ENCODE measurements at regions of chr1 and their contacts with region 1.

Region 1: DNA sequence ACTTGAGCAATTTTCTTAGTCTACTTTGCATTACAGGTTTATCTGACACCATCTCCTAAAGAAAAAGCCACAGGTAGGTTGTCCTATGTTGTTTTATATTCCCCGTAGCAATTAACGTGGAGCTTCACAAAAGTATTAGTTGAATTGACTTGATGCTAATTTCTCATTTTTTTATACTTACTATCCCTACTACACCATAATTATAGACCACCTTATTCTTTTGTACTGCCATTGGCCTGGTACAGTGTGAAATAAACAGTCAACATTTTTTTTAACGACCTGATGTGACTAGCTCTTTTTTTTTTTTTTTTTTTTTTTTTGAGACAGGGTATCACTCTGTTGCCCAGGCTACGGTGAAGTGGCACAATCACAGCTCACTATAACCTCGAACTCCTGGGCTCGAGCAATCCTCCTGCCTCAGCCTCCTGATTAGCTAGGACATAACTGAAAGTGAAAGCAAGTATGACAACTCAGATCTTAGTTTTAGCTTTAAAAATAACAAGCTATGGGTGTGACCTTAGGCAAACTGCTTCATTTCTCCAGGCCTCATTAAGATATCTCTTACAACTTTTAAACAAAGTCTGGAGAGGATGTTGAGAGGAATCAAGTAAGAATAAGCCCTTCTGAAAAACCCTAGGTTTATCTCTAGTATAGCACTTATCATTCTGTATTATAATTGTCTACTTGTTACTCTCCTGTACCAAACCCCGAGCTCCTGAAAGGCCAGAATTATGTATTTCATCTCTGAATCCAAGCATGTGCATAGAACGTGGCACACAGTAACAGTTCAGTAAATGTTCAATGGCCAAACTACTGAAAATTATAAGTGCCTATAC is 49.5 kb downstream of the LUZP1 start:
- DNase-seq: no peak
- H3K4me3 ChIP-seq: no peak overlapping the region
- H3K27ac ChIP-seq: no peak overlapping the region
- H3K4me1 ChIP-seq: peaks cover 16% of the 10 kb centered on the region
- H3K27me3 ChIP-seq: no peaks in the 10 kb centered on the region
- CTCF ChIP-seq: no peak

Region 2: GRCh38 chr1:23004112-23004511 is 115.1 kb before region 1 on chr1:
- CTCF ChIA-PET with region 1: no interaction called
- POLR2A ChIA-PET with region 1: no interaction called
- intact Hi-C with region 1: no loop called
- DNase-seq: peak; percentile 50 to 83
- H3K4me3 ChIP-seq: peak overlapping the region; percentile 58
- H3K27ac ChIP-seq: peak overlapping the region; percentile 92
- H3K4me1 ChIP-seq: peaks cover 66% of the 10 kb centered on the region
- H3K27me3 ChIP-seq: no peaks in the 10 kb centered on the region
- CTCF ChIP-seq: no peak

Region 3: DNA sequence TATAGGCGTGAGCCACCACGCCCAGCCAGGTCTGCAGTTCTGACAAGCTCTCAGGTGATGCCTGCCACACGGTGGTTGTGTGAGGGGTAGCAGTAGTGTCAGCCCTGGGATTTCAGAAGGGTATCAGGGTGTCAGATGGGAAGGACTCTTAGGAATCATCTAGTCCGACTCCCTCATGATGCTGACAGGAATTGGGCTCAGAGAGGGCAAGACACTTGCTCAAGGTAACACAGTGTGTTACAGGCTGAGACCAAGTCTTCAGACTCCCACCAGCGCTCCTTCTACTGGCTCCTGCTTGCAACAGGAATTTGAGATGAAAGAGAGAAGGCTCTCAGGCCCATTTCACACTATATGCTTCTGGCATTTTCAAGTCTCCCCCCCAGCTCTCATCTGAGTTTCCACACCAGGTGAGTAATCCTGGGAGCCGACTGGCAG is 91.2 kb after region 1 on chr1:
- CTCF ChIA-PET with region 1: no interaction called
- POLR2A ChIA-PET with region 1: interaction called, 32 read pairs
- intact Hi-C with region 1: no loop called
- DNase-seq: peak in 1 of 2 experiments; percentile 40
- H3K4me3 ChIP-seq: no peak overlapping the region
- H3K27ac ChIP-seq: peak overlapping the region; percentile 48
- H3K4me1 ChIP-seq: peaks cover 11% of the 10 kb centered on the region
- H3K27me3 ChIP-seq: no peaks in the 10 kb centered on the region
- CTCF ChIP-seq: peak; percentile 61